Activated CD8-positive, alpha-beta T cell treated with anti-CD3 and anti-CD28 coated beads, Interleukin-2, amount 10 ng/mL, durations not matched to agents 7 days and 5 days (primary cell): ENCODE measurements at regions of chr14 and their contacts with region 1.

Region 1: DNA sequence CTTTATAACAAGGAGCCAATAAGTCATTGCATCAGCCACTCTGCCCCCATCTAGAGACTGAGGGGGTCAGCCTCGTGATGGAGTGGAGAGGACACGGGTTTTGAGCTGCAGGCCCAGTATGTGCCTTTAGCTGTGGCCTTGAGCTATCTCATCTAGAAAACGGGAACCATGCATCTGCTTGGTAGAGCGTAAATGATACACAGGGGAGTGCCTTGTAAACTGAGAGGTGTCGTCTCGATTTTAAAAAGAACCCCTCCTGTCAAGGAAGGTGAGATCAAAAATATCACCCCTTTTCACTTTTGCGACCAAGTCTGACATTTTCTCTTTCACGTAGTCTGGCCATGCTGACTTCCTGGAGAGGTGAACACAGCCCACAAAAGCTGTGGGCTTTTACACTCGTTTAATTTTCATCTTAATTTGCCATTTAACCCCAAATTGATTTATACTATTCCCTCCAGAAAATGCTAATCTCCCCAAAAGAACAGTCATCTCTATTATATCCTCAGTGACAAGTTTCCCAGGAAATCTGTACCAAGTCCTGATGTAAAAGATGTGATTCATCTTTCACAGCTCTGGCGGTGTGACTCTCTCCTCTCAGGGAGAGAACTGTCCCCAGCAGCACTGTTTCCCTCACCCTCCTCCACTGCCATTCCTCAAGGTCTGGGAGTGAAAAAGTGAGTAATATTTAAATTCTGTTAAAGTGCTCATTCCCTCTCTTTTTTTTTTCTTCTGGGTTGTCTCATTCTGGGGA is 30.6 kb downstream of the VCPKMT start:
- DNase-seq: peak; percentile 42
- ATAC-seq: no peak
- H3K4me3 Mint-ChIP-seq: peak overlapping the region; percentile 68
- H3K27ac Mint-ChIP-seq: peak overlapping the region; percentile 96
- H3K4me1 Mint-ChIP-seq: peaks cover 95% of the 10 kb centered on the region
- H3K27me3 Mint-ChIP-seq: no peaks in the 10 kb centered on the region

Region 2: GRCh38 chr14:49280566-49280965 is 805.2 kb before region 1 on chr14:
- CTCF ChIA-PET with region 1: no interaction called
- POLR2A ChIA-PET with region 1: no interaction called
- DNase-seq: no peak
- ATAC-seq: no peak
- H3K4me3 Mint-ChIP-seq: no peak overlapping the region
- H3K27ac Mint-ChIP-seq: no peak overlapping the region
- H3K4me1 Mint-ChIP-seq: no peaks in the 10 kb centered on the region
- H3K27me3 Mint-ChIP-seq: peaks cover 3% of the 10 kb centered on the region

Region 3: GRCh38 chr14:49867831-49868723 is 217.7 kb before region 1 on chr14:
- CTCF ChIA-PET with region 1: interaction called, 86 read pairs
- POLR2A ChIA-PET with region 1: interaction called, 60 read pairs
- DNase-seq: peak; percentile 99
- ATAC-seq: peak; percentile 91
- H3K4me3 Mint-ChIP-seq: peak overlapping the region; percentile 91
- H3K27ac Mint-ChIP-seq: peak overlapping the region; percentile 96
- H3K4me1 Mint-ChIP-seq: peaks cover 21% of the 10 kb centered on the region
- H3K27me3 Mint-ChIP-seq: no peaks in the 10 kb centered on the region

Region 4: GRCh38 chr14:49892636-49893308 is 193.0 kb before region 1 on chr14 and contains the start of gene ARF6:
- CTCF ChIA-PET with region 1: interaction called, 7 read pairs
- POLR2A ChIA-PET with region 1: interaction called, 21 read pairs
- DNase-seq: peak; percentile 98
- ATAC-seq: peak; percentile 89
- H3K4me3 Mint-ChIP-seq: peak within 1 kb of the TSS; percentile 90
- H3K27ac Mint-ChIP-seq: peak within 1 kb of the TSS; percentile 97
- H3K4me1 Mint-ChIP-seq: peaks cover 17% of the 10 kb centered on the region
- H3K27me3 Mint-ChIP-seq: no peaks in the 10 kb centered on the region
- total RNA-seq, gene ARF6: 183 to 193 TPM

Region 5: DNA sequence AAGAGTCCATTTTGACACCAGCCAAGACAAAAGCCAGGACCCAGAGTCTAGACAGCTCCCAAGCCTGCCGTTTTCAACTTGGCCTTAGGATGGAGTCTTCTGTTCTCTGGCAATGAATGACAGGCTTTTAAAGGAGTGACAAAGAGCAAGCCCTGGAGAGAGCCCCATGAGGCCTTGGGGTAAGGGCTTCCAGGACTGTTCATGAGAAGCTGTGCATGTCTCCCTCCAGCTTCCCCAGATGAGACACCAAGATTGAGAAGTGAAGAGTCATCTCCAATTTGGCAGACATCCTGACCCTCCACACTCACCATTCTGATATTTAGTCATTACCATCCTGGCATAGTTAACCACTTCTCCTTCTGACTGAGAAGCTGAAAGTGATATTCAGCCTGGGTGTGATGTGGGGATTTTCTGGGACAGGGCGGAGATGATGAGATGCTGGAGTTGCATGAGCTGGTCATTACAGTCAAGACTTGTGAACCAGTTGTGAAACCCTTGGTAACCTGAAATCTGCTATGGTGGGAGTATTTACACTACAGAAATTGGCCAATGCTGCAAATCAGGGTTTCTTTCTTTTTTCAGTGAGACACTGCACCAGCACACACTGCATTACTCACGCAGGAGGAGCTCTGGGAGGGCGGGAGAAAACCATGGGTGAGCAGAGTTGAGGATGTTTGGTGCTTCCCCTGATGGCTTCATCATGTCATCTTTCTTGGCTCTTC is 47.2 kb before region 1 on chr14:
- CTCF ChIA-PET with region 1: interaction called, 12 read pairs
- POLR2A ChIA-PET with region 1: interaction called, 41 read pairs
- DNase-seq: peak; percentile 44
- ATAC-seq: peak; percentile 22
- H3K4me3 Mint-ChIP-seq: peak overlapping the region; percentile 74
- H3K27ac Mint-ChIP-seq: peak overlapping the region; percentile 98
- H3K4me1 Mint-ChIP-seq: peaks cover 85% of the 10 kb centered on the region
- H3K27me3 Mint-ChIP-seq: no peaks in the 10 kb centered on the region

Region 6: DNA sequence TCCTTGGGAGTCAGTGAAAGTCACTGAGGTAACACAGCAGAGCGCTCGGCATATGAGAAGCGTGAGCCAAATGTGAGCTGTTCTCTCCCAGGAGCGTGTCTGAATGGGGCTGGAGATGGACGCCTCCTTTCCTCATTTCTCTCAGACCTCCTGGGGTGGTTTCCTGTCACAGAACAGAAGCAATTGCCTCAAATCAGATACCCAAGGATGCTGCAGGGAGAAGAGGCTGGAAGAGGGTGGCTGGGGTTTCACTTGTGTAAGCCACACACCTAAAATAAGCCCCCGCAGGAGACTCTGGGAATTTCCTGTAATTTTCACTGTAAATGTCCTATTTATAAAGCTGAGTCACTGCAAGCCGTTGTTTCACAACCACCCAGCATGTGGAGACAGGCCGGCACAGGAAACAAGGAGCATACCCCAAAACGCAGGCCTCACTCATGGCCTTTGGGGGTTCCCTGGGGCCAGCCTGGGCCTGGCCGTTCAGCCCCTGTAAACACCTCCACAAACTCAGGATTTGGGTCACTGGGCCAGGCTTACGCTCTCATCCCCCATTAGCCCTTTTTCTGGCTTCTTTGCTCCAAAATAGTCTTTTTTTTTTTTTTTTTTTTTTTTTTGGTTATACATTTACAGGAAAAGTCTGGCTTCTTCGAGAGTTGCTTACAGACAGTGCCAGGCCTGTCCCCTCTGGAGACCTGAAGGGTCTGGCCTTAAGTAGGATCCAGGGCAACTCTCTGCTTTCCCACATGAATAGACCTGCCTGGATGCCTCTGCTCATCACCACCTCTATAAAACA is 24.7 kb before region 1 on chr14:
- CTCF ChIA-PET with region 1: interaction called, 60 read pairs
- POLR2A ChIA-PET with region 1: interaction called, 151 read pairs
- DNase-seq: peak; percentile 70
- ATAC-seq: peak; percentile 23
- H3K4me3 Mint-ChIP-seq: peak overlapping the region; percentile 95
- H3K27ac Mint-ChIP-seq: peak overlapping the region; percentile 99
- H3K4me1 Mint-ChIP-seq: peaks cover 94% of the 10 kb centered on the region
- H3K27me3 Mint-ChIP-seq: no peaks in the 10 kb centered on the region

Region 7: DNA sequence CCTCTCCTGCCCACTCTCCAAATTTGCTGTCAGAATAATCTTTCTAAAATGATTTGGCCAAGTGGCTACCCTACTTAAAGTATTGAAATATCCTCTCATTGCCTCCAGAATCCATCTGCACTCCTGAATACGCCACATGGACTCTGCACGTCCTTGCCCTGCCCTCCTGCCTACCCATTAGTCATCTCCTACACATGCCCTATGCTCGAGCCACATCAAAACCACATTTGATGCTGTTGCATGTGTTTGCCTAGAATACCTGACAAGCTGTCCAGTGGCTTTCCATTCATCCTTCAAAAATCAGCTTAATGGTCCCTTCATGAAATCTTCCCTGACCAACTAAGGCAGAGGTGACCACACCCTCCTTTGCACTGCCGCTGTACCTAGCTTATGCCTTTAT is 13.6 kb after region 1 on chr14:
- CTCF ChIA-PET with region 1: interaction called, 27 read pairs
- POLR2A ChIA-PET with region 1: interaction called, 24 read pairs
- DNase-seq: no peak
- ATAC-seq: no peak
- H3K4me3 Mint-ChIP-seq: no peak overlapping the region
- H3K27ac Mint-ChIP-seq: peak overlapping the region; percentile 33
- H3K4me1 Mint-ChIP-seq: peaks cover 85% of the 10 kb centered on the region
- H3K27me3 Mint-ChIP-seq: no peaks in the 10 kb centered on the region

Region 8: DNA sequence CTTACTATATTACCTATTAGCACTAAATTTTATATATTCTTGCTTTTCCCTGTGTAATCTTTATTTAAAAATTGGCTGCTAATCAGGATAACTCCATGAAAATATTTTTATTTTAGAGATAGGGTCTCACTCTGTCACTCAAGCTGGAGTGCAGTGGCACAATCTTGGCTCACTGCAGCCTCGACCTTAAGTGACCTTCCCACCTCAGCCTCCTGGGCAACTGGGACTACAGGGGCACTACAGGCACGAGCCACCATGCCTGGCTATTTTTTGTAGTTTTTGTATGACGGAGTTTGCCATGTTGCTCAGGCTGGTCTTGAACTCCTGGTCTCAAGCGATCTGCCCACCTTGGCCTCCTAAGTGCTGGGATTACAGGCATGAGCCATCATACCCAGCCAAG is 63.1 kb after region 1 on chr14:
- CTCF ChIA-PET with region 1: no interaction called
- POLR2A ChIA-PET with region 1: no interaction called
- DNase-seq: no peak
- ATAC-seq: no peak
- H3K4me3 Mint-ChIP-seq: no peak overlapping the region
- H3K27ac Mint-ChIP-seq: no peak overlapping the region
- H3K4me1 Mint-ChIP-seq: no peaks in the 10 kb centered on the region
- H3K27me3 Mint-ChIP-seq: no peaks in the 10 kb centered on the region

Region 9: GRCh38 chr14:50225067-50225973 is 139.6 kb after region 1 on chr14:
- CTCF ChIA-PET with region 1: no interaction called
- POLR2A ChIA-PET with region 1: no interaction called
- DNase-seq: no peak
- ATAC-seq: no peak
- H3K4me3 Mint-ChIP-seq: no peak overlapping the region
- H3K27ac Mint-ChIP-seq: no peak overlapping the region
- H3K4me1 Mint-ChIP-seq: peaks cover 43% of the 10 kb centered on the region
- H3K27me3 Mint-ChIP-seq: no peaks in the 10 kb centered on the region